ENCODE measurements at regions of chr6 and their contacts with region 1.

Region 1: DNA sequence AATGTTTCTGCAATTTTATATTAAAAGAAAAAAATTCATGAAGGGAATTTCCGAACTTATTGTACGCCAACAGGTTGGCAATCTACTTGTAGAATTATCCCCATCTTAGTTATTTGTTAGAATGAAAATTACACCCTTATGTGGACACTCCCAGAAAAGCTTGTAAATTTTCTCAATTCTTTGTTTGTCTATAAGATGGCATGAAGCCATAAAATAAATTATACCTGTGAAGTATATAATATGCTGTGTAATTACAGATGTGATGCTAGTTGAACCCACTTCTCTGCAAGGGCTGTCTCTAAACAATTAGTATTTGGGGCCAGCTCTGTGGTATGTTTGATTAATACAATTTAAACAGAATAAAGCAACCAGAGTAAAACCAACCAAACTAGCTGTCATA is 52.1 kb upstream of the DSP start:
- DNase-seq: no peak
- H3K4me3 ChIP-seq: no peak overlapping the region
- H3K27ac ChIP-seq: no peak overlapping the region
- H3K27me3 ChIP-seq: peaks cover 0 to 18% (median 0%) of the 10 kb centered on the region in 45 donors
- CTCF ChIP-seq: no peak

Region 2: DNA sequence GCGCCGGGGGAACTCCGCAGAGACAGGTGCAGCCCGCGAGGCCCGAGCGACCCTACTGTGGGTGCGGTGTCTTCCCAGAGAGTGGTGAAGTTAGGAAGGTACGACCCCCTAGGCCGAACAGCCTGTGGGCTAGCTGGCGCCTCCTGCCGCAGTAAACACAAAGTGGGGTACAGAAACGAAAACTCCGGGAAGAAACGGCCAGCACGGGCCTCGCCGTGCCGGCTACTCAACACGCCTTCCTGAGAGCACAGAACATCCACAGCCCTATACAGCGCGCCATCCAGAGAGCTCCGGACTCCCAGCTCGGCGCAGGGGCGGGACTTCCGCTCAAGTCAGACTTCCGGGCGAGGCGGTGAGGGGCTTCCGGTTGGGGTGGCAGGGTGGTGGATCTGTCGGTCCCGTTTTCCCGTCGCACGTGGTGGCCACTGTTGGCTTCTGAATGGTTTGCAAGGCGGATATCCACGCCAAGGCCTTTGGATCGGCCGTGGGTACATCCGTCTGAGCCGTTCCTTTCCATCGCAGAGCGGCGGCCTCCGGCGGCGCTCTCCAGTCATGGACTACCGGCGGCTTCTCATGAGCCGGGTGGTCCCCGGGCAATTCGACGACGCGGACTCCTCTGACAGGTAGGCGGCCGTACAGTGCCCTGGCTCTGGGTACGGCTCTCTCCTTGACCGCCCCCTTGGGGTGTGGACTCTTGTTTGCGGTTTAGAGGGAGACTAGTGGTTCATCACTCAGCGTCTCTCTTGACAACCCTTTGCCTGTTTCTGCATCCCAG is 99.7 kb before region 1 on chr6 and contains the starts of genes CAGE1 and RIOK1:
- intact Hi-C with region 1: no loop called
- DNase-seq: peak; percentile 88 to 97 (median 94)
- H3K4me3 ChIP-seq: peak within 1 kb of the TSS; percentile 43 to 99 (median 87)
- H3K27ac ChIP-seq: peak within 1 kb of the TSS; percentile 44 to 96 (median 84)
- H3K27me3 ChIP-seq: no peaks in the 10 kb centered on the region
- CTCF ChIP-seq: peak in 44 of 56 donors; percentile 5 to 52 (median 30)
- total RNA-seq, gene CAGE1: 0.14 to 0.63 (median 0.23) TPM in 21 of 120 experiments, not detected in the others
- total RNA-seq, gene RIOK1: 5.9 to 18.7 (median 11.8) TPM

Region 3: DNA sequence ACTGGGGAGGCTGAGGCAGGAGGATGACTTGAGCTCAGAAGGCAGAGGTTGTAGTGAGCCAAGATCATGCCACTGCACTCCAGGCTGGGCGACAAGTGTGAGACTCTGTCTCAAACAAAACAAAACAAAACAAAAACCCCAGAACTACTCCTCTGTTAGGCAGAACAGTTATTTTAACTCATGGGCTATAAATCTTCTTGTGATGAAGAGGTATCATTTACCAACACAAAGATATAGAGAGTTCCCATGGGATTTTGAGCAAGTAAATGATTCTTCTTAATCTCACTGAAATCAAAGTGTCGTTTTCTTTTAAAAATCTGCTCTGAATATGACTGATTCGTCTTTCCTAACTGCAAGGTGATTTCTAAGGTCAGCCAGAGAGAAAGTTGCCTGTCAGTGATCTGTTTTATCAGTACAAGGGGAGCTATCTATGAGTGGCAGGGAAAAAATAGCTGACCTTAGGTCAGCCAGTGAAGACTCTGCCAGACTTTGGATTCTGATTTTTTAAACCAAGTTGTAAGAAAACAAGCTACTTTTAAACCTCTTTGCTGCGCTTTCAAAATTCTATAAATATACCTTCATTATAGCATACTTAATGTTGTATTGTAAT is 48.3 kb after region 1 on chr6:
- intact Hi-C with region 1: loop called in 1 of 2 experiments (anchors 2 kb)
- DNase-seq: no peak
- H3K4me3 ChIP-seq: no peak overlapping the region
- H3K27ac ChIP-seq: no peak overlapping the region
- H3K27me3 ChIP-seq: peaks cover 0 to 99% (median 72%) of the 10 kb centered on the region in 45 donors
- CTCF ChIP-seq: no peak